ENCODE measurements at regions of chr10 and their contacts with region 1.

Region 1: GRCh38 chr10:126504063-126504739 is 115.9 kb upstream of the ADAM12 start:
- DNase-seq: peak; percentile 24
- H3K4me3 ChIP-seq: no peak overlapping the region
- H3K27ac ChIP-seq: no peak overlapping the region
- H3K4me1 ChIP-seq: no peaks in the 10 kb centered on the region
- H3K27me3 ChIP-seq: no peaks in the 10 kb centered on the region
- CTCF ChIP-seq: peak; percentile 56

Region 2: GRCh38 chr10:125868372-125868975 is 635.7 kb before region 1 on chr10:
- intact Hi-C with region 1: loop called (anchors 10 kb)
- DNase-seq: no peak
- H3K4me3 ChIP-seq: no peak overlapping the region
- H3K27ac ChIP-seq: no peak overlapping the region
- H3K4me1 ChIP-seq: no peaks in the 10 kb centered on the region
- H3K27me3 ChIP-seq: no peaks in the 10 kb centered on the region
- CTCF ChIP-seq: peak; percentile 80

Region 3: DNA sequence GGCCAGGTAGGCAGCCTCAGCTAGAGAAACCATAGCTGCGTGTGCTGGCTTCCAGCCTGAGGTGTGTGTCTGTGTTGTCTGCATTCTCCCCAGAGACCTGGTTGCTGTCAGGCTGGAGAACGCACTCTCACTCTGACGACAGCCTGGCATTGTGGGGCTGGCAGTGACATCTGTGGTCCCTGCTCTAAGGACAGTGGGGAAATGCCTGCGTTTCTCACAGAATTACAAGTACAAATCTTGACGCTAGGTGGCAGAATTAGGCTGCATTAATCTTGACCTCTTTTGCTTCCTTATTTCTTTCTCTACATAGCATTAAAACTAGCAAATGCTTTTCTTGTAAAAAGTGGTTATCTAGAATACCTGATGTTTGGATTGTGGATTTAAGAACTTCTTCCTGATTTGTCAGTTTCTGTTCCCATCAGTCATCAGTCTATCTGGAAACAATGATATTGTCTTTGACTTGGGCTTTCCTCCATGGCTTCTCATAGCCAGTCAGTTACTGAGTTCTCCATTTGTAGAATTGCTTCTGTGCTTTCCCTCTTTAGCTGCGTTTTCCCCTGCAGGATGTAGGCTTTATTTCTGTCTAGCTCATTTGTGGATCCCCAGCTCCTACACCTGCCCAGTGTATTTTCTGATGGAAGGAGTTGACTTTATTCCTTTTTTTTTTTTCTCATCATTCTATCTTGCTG is 521.8 kb before region 1 on chr10:
- intact Hi-C with region 1: loop called (anchors 5 kb)
- DNase-seq: peak; percentile 56
- H3K4me3 ChIP-seq: no peak overlapping the region
- H3K27ac ChIP-seq: no peak overlapping the region
- H3K4me1 ChIP-seq: no peaks in the 10 kb centered on the region
- H3K27me3 ChIP-seq: no peaks in the 10 kb centered on the region
- CTCF ChIP-seq: peak; percentile 49

Region 4: GRCh38 chr10:126387023-126387921 is 116.9 kb before region 1 on chr10:
- intact Hi-C with region 1: loop called (anchors 10 kb)
- DNase-seq: peak; percentile 76
- H3K4me3 ChIP-seq: peak overlapping the region; percentile 30
- H3K27ac ChIP-seq: no peak overlapping the region
- H3K4me1 ChIP-seq: no peaks in the 10 kb centered on the region
- H3K27me3 ChIP-seq: peaks cover 18% of the 10 kb centered on the region
- CTCF ChIP-seq: peak; percentile 71

Region 5: DNA sequence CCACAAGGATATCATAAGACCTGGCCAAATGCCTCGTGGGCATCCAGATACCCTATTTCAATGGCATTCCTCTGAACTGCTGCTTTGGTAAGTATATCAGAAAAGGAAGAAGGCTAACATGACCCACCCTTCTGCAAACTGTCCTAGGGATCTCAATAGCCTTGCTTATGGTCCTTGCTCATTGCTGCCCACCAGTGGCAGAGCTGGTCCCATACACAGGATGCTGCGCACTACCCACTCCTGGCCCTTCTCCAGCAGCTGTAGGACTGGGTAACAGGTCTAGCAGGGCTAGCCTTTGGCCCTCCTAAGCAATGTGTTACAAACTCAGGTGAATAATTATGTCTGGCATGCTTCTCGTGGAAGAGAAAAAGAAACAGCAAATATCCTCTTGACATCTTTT is 93.8 kb after region 1 on chr10:
- intact Hi-C with region 1: no loop called
- DNase-seq: peak; percentile 33
- H3K4me3 ChIP-seq: no peak overlapping the region
- H3K27ac ChIP-seq: no peak overlapping the region
- H3K4me1 ChIP-seq: no peaks in the 10 kb centered on the region
- H3K27me3 ChIP-seq: no peaks in the 10 kb centered on the region
- CTCF ChIP-seq: peak; percentile 29

Measured in colonic mucosa (tissue), 4 donors.